Endothelial cell of umbilical vein (primary cell): ENCODE measurements at regions of chr21 and their contacts with region 1.

Region 1: GRCh38 chr21:38386967-38387366 is 111.3 kb downstream of the ERG start:
- DNase-seq: no peak
- H3K4me3 ChIP-seq: no peak overlapping the region
- H3K27ac ChIP-seq: peak overlapping the region; percentile 65
- H3K4me1 ChIP-seq: peaks cover 46% of the 10 kb centered on the region
- H3K27me3 ChIP-seq: no peaks in the 10 kb centered on the region
- CTCF ChIP-seq: no peak
- POLR2A ChIP-seq: no peak

Region 2: GRCh38 chr21:37970548-37970947 is 416.4 kb before region 1 on chr21:
- CTCF ChIA-PET with region 1: no interaction called
- POLR2A ChIA-PET with region 1: no interaction called
- dilution Hi-C with region 1: no loop called
- intact Hi-C with region 1: no loop called
- DNase-seq: no peak
- H3K4me3 ChIP-seq: no peak overlapping the region
- H3K27ac ChIP-seq: no peak overlapping the region
- H3K4me1 ChIP-seq: no peaks in the 10 kb centered on the region
- H3K27me3 ChIP-seq: peaks cover 0 to 2% of the 10 kb centered on the region in 2 experiments
- CTCF ChIP-seq: no peak
- POLR2A ChIP-seq: no peak

Region 3: GRCh38 chr21:38244885-38245545 is 142.0 kb before region 1 on chr21:
- CTCF ChIA-PET with region 1: no interaction called
- POLR2A ChIA-PET with region 1: no interaction called
- dilution Hi-C with region 1: no loop called
- intact Hi-C with region 1: no loop called
- DNase-seq: peak; percentile 33
- H3K4me3 ChIP-seq: no peak overlapping the region
- H3K27ac ChIP-seq: peak overlapping the region; percentile 7
- H3K4me1 ChIP-seq: peaks cover 22% of the 10 kb centered on the region
- H3K27me3 ChIP-seq: peaks cover 2 to 12% of the 10 kb centered on the region in 2 experiments
- CTCF ChIP-seq: no peak
- POLR2A ChIP-seq: no peak

Region 4: DNA sequence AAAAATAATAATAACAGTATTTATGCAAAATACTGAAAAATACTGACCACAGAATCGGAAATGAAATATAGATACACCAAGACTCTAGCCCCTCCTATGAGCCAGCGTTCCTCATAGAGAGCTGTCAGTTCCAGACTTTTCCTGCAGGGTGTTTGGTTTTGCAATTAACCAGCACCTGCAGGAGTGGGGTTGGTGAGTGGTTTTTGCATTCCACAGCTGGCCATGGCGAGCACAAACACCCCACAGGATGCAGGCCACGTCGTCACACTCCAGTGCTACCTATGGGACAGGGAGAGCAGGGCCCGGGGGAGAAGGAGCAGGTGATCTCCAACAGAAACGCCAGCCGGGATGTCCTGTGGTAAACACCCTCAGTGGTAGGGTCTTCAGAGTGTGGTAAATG is 17.2 kb after region 1 on chr21:
- CTCF ChIA-PET with region 1: no interaction called
- POLR2A ChIA-PET with region 1: no interaction called
- dilution Hi-C with region 1: no loop called
- intact Hi-C with region 1: loop called (anchors 2 kb)
- DNase-seq: no peak
- H3K4me3 ChIP-seq: no peak overlapping the region
- H3K27ac ChIP-seq: no peak overlapping the region
- H3K4me1 ChIP-seq: peaks cover 3% of the 10 kb centered on the region
- H3K27me3 ChIP-seq: no peaks in the 10 kb centered on the region
- CTCF ChIP-seq: no peak
- POLR2A ChIP-seq: no peak

Region 5: GRCh38 chr21:38488640-38489270 is 101.8 kb after region 1 on chr21:
- CTCF ChIA-PET with region 1: no interaction called
- POLR2A ChIA-PET with region 1: no interaction called
- dilution Hi-C with region 1: no loop called
- intact Hi-C with region 1: loop called (anchors 2 kb)
- DNase-seq: peak; percentile 81
- H3K4me3 ChIP-seq: peak overlapping the region in 1 of 3 experiments; percentile 32
- H3K27ac ChIP-seq: peak overlapping the region; percentile 100
- H3K4me1 ChIP-seq: peaks cover 97% of the 10 kb centered on the region
- H3K27me3 ChIP-seq: no peaks in the 10 kb centered on the region
- CTCF ChIP-seq: no peak
- POLR2A ChIP-seq: no peak

Region 6: DNA sequence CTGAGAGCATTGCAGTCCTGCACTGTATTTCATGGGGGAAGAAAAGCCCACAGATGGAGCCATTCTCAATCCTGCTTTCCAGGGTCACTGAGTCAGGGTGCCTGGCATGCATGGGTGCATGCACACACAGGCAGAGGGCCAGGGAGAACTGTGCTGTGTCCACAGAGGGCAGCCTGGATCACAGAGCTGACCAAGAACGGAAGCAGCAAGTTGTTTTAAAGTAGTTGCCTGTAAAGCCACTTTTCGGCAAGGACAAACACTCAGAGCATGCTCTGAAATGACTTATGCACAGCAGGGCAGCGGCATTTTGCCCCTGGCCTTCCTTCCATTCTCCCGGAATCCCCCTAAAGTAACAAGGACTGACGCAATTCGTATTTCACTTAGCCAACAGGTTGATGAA is 107.7 kb after region 1 on chr21:
- CTCF ChIA-PET with region 1: interaction called, 4 read pairs
- POLR2A ChIA-PET with region 1: no interaction called
- dilution Hi-C with region 1: no loop called
- intact Hi-C with region 1: loop called (anchors 1 kb)
- DNase-seq: peak; percentile 88
- H3K4me3 ChIP-seq: peak overlapping the region; percentile 84 to 100 (median 99)
- H3K27ac ChIP-seq: peak overlapping the region; percentile 100
- H3K4me1 ChIP-seq: peaks cover 63% of the 10 kb centered on the region
- H3K27me3 ChIP-seq: no peaks in the 10 kb centered on the region
- CTCF ChIP-seq: no peak
- POLR2A ChIP-seq: peak; percentile 86